ENCODE measurements at regions of chr16 and their contacts with region 1.

Region 1: GRCh38 chr16:3983081-3983520 is 102.6 kb upstream of the CREBBP start:
- DNase-seq: peak; percentile 73 to 84
- H3K4me3 ChIP-seq: no peak overlapping the region
- H3K27ac ChIP-seq: no peak overlapping the region
- H3K4me1 ChIP-seq: peaks cover 0 to 4% (median 2%) of the 10 kb centered on the region in 4 experiments; a peak in 3 of 7 replicates
- H3K27me3 ChIP-seq: no peaks in the 10 kb centered on the region
- CTCF ChIP-seq: peak; percentile 87 to 98 (median 93)
- EP300 ChIP-seq: no peak
- POLR2A ChIP-seq: no peak
- RAD21 ChIP-seq: peak; percentile 98 to 99

Region 2: DNA sequence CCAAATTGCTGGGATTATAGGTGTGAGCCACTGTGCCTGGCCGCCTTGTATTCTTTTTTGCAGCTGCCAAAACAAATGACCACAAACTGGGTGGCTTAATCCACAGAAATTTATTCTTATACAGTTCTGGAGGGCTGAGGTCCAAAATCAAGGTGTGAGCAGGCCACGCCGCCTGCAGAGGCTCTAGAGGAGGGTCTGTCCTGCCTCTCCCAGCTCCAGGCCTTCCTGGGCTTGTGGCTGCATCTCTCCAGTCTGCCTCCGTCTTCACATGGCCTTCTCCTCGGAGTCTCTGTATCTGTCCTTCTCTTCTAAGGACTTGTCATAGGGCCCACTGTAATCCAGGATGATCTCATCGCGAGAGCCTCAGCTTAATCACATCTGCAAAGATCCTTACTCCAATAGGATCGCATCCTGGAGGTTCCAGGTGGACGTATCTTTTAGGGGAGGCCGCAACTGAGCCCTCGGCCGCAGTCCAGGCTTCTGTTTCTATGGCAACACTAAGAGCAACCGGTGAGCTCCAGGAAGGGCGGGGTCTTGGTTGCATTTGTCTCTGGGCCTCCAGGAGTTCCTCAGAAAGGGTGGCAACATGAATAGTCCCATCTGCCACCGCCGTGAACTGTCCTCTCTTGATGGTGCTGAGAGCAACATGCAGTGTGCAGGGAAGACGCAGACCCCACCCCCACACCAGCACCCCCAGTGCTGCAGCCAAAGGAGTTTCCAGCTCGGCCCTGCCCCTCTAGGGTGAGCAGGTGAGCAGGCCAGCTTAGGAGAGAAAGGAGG is 73.1 kb before region 1 on chr16:
- CTCF ChIA-PET with region 1: no interaction called
- POLR2A ChIA-PET with region 1: no interaction called
- DNase-seq: no peak
- H3K4me3 ChIP-seq: no peak overlapping the region
- H3K27ac ChIP-seq: no peak overlapping the region
- H3K4me1 ChIP-seq: peaks cover 0 to 3% (median under 1%) of the 10 kb centered on the region in 4 experiments; a peak in 1 of 7 replicates
- H3K27me3 ChIP-seq: no peaks in the 10 kb centered on the region
- CTCF ChIP-seq: no peak
- EP300 ChIP-seq: no peak
- POLR2A ChIP-seq: no peak
- RAD21 ChIP-seq: no peak

Region 3: GRCh38 chr16:3965781-3966582 is 17.1 kb before region 1 on chr16:
- CTCF ChIA-PET with region 1: interaction called, 17 read pairs
- POLR2A ChIA-PET with region 1: no interaction called
- DNase-seq: no peak
- H3K4me3 ChIP-seq: no peak overlapping the region
- H3K27ac ChIP-seq: no peak overlapping the region
- H3K4me1 ChIP-seq: peaks cover 0 to 11% (median 8%) of the 10 kb centered on the region in 4 experiments; a peak in 5 of 7 replicates
- H3K27me3 ChIP-seq: no peaks in the 10 kb centered on the region
- CTCF ChIP-seq: no peak
- EP300 ChIP-seq: no peak
- POLR2A ChIP-seq: no peak
- RAD21 ChIP-seq: no peak

Region 4: GRCh38 chr16:3971261-3971660 is 11.8 kb before region 1 on chr16:
- CTCF ChIA-PET with region 1: interaction called, 17 read pairs
- POLR2A ChIA-PET with region 1: no interaction called
- DNase-seq: no peak
- H3K4me3 ChIP-seq: no peak overlapping the region
- H3K27ac ChIP-seq: no peak overlapping the region
- H3K4me1 ChIP-seq: peaks cover 0 to 2% (median 0%) of the 10 kb centered on the region in 4 experiments; a peak in 1 of 7 replicates
- H3K27me3 ChIP-seq: no peaks in the 10 kb centered on the region
- CTCF ChIP-seq: no peak
- EP300 ChIP-seq: no peak
- POLR2A ChIP-seq: no peak
- RAD21 ChIP-seq: no peak

Region 5: DNA sequence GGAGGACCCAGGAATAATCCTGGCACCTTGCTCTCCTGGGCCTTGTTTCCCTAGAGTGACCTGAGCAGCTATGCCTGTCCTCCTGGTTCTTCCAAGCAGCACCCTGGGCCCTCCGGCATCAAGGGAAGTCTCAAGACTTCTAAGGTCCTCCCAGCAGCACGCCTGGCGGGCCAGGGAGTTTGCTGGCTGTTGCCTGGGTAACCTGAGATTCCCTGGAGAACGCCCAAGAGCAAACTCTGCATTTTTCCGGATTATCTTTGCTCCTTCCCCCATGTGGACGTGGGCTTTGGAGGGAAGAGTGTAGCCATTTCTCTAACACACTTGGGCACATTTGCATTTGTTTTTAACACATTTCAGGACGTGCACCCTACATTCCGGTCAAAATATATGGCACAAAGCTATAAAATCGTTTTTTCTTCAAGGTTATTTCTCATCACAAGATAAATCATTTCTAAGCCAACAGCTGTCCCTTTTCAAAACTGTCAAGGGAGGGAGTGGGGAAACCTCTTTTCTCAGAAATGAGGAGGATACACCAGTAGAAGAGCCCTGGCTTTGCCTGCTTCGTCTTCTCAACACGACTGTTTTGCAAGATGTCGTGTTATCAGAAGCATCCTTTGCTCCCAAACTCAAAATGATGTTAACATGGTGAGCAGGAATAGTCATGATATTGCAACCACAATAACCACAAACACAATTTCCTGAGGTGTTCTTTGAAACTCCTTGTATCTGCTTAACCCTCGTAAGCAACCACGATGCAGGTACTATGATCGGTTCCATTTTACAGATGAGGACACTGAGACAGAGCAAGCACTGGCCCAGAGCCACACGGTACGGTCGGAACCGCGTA is 16.6 kb after region 1 on chr16:
- CTCF ChIA-PET with region 1: interaction called, 19 read pairs
- POLR2A ChIA-PET with region 1: no interaction called
- DNase-seq: no peak
- H3K4me3 ChIP-seq: no peak overlapping the region
- H3K27ac ChIP-seq: 0 out of 2 replicates have a peak overlapping the region, but pooled peaks have one; percentile 53
- H3K4me1 ChIP-seq: peaks cover 2 to 7% (median 6%) of the 10 kb centered on the region in 4 experiments; a peak in 5 of 7 replicates
- H3K27me3 ChIP-seq: no peaks in the 10 kb centered on the region
- CTCF ChIP-seq: no peak
- EP300 ChIP-seq: no peak
- POLR2A ChIP-seq: no peak
- RAD21 ChIP-seq: no peak

Region 6: DNA sequence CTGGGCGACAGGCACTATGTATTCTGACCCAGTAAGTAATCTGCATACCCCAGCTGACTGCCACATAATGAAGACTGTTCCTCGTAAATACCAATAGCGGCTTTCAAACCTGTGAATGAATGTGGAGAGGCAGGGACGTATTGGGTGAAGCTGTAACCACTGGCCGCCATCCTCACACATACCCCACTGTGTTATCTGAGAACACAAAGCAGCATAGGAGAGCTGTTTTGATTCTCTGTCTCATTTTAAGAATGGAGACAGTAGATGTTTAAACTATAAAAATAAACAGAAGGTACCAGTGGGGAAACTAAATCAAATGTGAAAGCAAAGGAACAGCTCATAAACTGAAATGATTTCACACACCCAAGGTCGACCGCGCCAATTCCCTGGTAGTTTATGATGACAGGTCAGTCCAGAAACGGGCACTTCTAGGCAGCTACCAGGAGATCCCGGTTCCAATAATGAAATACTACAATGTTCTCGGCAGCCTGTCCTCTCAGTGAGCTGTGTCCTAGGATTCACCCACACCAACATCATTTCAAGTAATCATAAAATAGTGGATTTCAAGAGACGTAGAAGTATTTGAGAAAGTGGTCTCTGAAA is 23.4 kb after region 1 on chr16:
- CTCF ChIA-PET with region 1: interaction called, 15 read pairs
- POLR2A ChIA-PET with region 1: no interaction called
- DNase-seq: no peak
- H3K4me3 ChIP-seq: no peak overlapping the region
- H3K27ac ChIP-seq: no peak overlapping the region
- H3K4me1 ChIP-seq: peaks cover 7 to 13% (median 9%) of the 10 kb centered on the region in 4 experiments
- H3K27me3 ChIP-seq: no peaks in the 10 kb centered on the region
- CTCF ChIP-seq: no peak
- EP300 ChIP-seq: no peak
- POLR2A ChIP-seq: no peak
- RAD21 ChIP-seq: no peak

Region 7: GRCh38 chr16:4160658-4161430 is 177.7 kb after region 1 on chr16:
- CTCF ChIA-PET with region 1: interaction called, 11 read pairs
- POLR2A ChIA-PET with region 1: no interaction called
- DNase-seq: no peak
- H3K4me3 ChIP-seq: no peak overlapping the region
- H3K27ac ChIP-seq: no peak overlapping the region
- H3K4me1 ChIP-seq: no peaks in the 10 kb centered on the region
- H3K27me3 ChIP-seq: no peaks in the 10 kb centered on the region
- CTCF ChIP-seq: peak in 2 of 3 experiments; percentile 19 to 24; a peak in 2 of 4 replicates
- EP300 ChIP-seq: no peak
- POLR2A ChIP-seq: no peak
- RAD21 ChIP-seq: peak; percentile 28 to 49; a peak in 3 of 4 replicates

Region 8: DNA sequence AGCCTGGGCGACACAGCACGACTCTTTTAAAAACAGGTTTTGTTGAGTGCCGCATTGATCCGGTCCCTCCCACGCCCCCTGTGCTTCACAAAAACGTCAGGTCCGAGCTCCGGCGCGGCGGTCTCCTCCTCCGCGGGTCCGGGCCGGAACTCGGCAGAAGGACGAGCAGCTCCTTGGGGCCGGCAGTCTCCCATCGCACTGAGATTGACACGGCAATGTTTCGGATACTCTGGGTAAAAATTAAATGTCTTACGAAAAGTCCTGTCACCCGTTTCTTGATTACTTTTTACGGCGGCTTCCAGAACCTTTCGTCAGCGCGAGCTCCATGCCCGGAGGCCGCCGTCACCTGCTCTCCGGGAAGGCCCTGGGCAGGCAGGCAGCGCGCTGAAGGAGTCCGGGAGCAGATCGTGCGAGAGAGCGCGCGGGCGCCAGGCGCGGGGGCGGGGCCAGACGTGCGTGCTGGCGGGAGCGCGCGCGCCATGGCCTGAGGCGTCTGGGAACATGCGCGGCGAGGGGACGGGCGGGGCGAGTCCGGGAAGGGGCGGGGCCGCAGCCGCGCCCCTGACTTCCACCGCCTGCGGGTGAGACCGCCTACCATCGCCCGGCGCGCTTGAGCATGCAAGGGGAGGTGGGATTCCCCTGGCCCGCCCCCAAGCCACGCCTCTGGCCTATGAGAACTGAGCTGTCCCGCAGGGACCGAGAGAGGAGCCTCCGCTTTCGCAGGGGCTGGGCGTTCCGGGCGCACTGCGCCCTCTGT is 270.5 kb after region 1 on chr16:
- CTCF ChIA-PET with region 1: interaction called, 22 read pairs
- POLR2A ChIA-PET with region 1: interaction called, 9 read pairs
- DNase-seq: peak; percentile 98
- H3K4me3 ChIP-seq: peak overlapping the region; percentile 41 to 70 (median 58)
- H3K27ac ChIP-seq: no peak overlapping the region; the same call in 1 of the 2 replicates
- H3K4me1 ChIP-seq: peaks cover 0 to 3% (median 0%) of the 10 kb centered on the region in 4 experiments; a peak in 1 of 7 replicates
- H3K27me3 ChIP-seq: no peaks in the 10 kb centered on the region
- CTCF ChIP-seq: no peak
- EP300 ChIP-seq: no peak
- POLR2A ChIP-seq: peak; percentile 53 to 70
- RAD21 ChIP-seq: peak; percentile 87 to 91